Thyroid gland (tissue), 4 donors: ENCODE measurements at regions of chr2 and their contacts with region 1.

Region 1: GRCh38 chr2:61764035-61764800 is 89.6 kb downstream of the FAM161A start:
- DNase-seq: peak; percentile 97 to 98
- H3K4me3 ChIP-seq: peak overlapping the region; percentile 60 to 67 (median 61)
- H3K27ac ChIP-seq: peak overlapping the region; percentile 95 to 100 (median 95)
- H3K4me1 ChIP-seq: peaks cover 5% of the 10 kb centered on the region in 2 donors
- H3K27me3 ChIP-seq: no peaks in the 10 kb centered on the region
- CTCF ChIP-seq: no peak
- POLR2A ChIP-seq: peak in 1 of 2 donors; percentile 94

Region 2: GRCh38 chr2:61176755-61177726 is 587.2 kb before region 1 on chr2:
- intact Hi-C with region 1: loop called (anchors 10 kb)
- DNase-seq: peak; percentile 95 to 96
- H3K4me3 ChIP-seq: peak overlapping the region; percentile 73 to 93 (median 80)
- H3K27ac ChIP-seq: peak overlapping the region; percentile 96 to 100 (median 99)
- H3K4me1 ChIP-seq: peaks cover 31 to 41% of the 10 kb centered on the region in 2 donors
- H3K27me3 ChIP-seq: no peaks in the 10 kb centered on the region
- CTCF ChIP-seq: peak in 3 of 6 experiments; percentile 11 to 14 (median 14)
- POLR2A ChIP-seq: peak; percentile 73 to 92

Region 3: DNA sequence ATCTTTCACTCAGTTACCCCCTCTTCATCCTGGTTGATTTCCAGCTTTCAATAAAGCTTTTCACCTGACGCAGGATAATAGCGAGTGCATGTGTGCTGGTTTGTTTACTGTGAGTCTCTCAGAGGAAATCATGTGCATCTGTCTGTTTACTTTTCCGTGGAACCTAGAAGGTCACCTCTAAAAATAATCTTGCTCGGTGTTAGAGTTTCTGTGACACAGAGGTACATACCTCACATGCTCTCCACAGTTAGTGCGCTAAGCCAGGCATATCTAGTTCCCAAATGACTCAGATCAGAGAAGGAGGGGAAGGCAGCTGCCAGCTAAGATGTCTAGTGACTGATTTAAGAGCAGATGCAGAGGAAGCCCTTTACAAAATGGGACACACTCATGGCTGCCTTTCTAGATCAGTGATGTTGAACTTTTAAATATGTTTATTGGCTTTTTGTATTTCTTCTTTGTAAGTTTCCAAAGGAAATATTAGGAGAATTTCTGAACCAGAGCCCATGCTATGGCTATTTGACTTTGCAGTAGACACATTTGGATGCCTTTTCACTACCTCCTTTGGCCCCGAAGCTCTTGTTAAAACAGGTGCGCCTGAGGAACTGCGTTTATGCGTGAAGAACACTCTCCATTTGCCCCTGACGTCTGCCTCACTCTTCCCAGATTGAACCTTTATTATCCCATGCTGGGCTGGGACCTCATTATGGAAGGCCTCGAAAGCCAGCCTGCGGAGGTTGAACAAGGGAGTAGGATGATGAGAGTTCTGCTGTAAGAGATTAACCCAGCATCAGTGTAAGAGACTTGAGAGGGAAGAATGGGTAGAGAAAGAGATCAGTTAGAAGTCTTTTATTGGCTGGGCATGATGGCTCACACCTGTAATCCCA is 56.0 kb before region 1 on chr2:
- intact Hi-C with region 1: loop called (anchors 10 kb)
- DNase-seq: peak; percentile 75 to 80
- H3K4me3 ChIP-seq: no peak overlapping the region
- H3K27ac ChIP-seq: peak overlapping the region; percentile 78 to 94 (median 86)
- H3K4me1 ChIP-seq: peaks cover 5 to 11% of the 10 kb centered on the region in 2 donors
- H3K27me3 ChIP-seq: no peaks in the 10 kb centered on the region
- CTCF ChIP-seq: no peak
- POLR2A ChIP-seq: peak in 1 of 2 donors; percentile 75